Thyroid gland (tissue), 4 donors: ENCODE measurements at regions of chrX and their contacts with region 1.

Region 1: DNA sequence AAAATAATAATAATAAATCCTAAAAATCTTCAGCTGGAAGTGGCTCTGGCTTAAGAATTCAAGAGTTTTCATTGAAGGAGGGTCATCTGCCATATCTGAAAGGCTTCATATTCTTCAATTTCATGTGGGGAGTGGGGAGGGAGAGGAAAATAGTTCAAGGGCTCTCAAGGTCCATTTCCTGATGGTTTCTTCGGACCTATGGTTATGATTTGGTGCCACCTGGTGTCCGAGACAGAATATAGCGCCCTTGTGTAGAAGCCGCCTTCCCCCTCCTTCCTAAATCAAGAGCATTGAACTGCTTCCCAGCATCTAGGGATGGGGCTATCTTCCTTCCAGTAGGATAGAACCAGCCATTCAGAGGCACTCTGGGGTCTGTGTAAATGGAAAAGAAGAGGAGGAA is 34.3 kb downstream of the NLGN3 start:
- DNase-seq: peak; percentile 51 to 52
- H3K4me3 ChIP-seq: no peak overlapping the region
- H3K27ac ChIP-seq: no peak overlapping the region
- H3K4me1 ChIP-seq: peaks cover 0 to 3% of the 10 kb centered on the region in 2 donors
- H3K27me3 ChIP-seq: no peaks in the 10 kb centered on the region
- CTCF ChIP-seq: peak in 5 of 6 experiments; percentile 22 to 72 (median 62)
- POLR2A ChIP-seq: no peak

Region 2: DNA sequence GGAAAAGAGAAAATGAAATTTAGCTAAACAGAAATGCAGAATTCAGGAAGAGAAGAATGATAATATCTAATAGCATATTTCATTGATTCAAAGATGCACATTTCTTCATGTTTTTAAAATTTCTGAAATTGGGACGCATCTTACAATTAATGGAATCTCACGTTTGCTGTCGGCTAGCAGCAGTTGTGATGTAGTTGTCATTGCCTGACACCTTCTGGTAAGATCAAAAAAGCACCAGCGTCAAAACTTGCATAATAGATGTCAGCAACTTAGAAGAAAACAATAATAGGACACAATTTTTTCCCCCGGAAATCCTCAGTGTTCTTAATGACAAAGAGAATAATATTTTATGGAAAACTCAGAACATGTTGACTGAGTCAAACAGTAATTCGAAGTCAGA is 218.2 kb before region 1 on chrX:
- intact Hi-C with region 1: loop called (anchors 10 kb)
- DNase-seq: no peak
- H3K4me3 ChIP-seq: no peak overlapping the region
- H3K27ac ChIP-seq: no peak overlapping the region
- H3K4me1 ChIP-seq: no peaks in the 10 kb centered on the region
- H3K27me3 ChIP-seq: no peaks in the 10 kb centered on the region
- CTCF ChIP-seq: no peak
- POLR2A ChIP-seq: no peak

Region 3: DNA sequence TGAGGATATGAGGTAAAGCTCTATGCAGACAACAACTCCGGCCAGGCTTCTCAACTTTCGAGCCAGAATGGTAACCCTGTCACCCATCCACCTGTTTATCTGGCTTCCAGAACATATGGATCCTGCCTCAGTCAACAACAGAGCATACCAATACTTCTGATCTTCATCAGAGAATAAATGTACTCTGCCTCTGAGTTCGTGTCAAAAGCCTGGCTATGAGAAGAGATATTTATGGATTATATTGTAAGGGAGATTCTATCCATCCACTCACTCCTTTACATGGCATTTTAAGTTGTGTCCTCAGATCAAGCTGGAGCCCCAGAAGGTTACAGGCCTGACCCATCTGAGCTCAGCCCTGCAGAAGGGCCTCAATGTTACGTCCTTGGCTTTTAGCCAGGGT is 93.0 kb before region 1 on chrX:
- intact Hi-C with region 1: no loop called
- DNase-seq: no peak
- H3K4me3 ChIP-seq: no peak overlapping the region
- H3K27ac ChIP-seq: no peak overlapping the region
- H3K4me1 ChIP-seq: no peaks in the 10 kb centered on the region
- H3K27me3 ChIP-seq: no peaks in the 10 kb centered on the region
- CTCF ChIP-seq: no peak
- POLR2A ChIP-seq: no peak

Region 4: GRCh38 chrX:71579136-71579989 is 400.5 kb after region 1 on chrX:
- intact Hi-C with region 1: no loop called
- DNase-seq: no peak
- H3K4me3 ChIP-seq: no peak overlapping the region
- H3K27ac ChIP-seq: no peak overlapping the region
- H3K4me1 ChIP-seq: no peaks in the 10 kb centered on the region
- H3K27me3 ChIP-seq: no peaks in the 10 kb centered on the region
- CTCF ChIP-seq: no peak
- POLR2A ChIP-seq: no peak